ENCODE measurements at regions of chr20 and their contacts with region 1.

Region 1: GRCh38 chr20:3262566-3262965 is 23.6 kb upstream of the SLC4A11 start:
- DNase-seq: no peak
- ATAC-seq: no peak
- H3K4me3 ChIP-seq: no peak overlapping the region
- H3K27ac ChIP-seq: no peak overlapping the region
- H3K4me1 ChIP-seq: no peaks in the 10 kb centered on the region
- H3K27me3 ChIP-seq: no peaks in the 10 kb centered on the region
- CTCF ChIP-seq: no peak

Region 2: DNA sequence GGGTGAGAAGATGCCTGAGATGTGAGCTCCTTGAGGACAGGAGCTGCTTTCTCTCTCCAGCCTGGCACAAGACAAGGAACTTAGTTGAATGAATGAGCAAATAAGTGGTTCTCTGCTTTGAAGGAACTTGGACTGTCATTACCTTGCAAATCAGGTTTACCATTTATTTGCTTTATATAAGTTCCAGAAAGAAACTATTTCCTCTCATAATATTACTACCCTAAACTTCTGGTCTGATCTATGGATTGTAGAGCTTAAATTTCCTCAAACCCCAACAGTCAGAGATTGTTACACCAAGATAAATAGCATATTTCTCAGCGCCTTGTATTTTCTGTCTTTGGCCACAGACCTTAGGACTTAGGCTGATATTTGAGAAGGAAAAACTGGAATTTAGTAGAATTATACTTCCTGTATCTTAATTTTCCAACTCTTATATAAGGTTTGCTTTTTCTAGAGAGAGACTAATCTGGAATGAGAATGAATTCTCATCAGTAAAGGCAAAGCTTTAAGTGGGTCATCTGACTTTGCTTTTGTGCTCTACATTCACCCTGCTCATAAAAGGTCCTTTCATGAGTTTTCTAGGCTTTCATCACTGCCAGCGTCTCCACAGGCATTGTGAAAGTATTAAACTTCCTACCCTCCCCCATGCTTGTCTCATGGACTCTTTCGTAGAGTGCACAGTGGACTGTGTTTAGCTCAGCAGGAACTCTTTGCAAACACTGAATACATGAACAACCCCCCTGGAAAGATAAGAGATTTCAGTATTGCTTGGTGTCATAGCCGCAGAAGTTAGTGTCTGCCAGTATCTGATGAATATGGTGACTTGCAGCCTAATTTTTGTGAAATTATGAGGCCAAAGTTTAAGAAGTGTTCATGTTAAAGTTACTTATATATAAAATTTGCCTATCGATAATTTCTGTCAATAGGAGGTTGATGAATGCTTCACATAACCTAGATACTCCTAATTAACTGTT is 315.3 kb before region 1 on chr20:
- CTCF ChIA-PET with region 1: no interaction called
- POLR2A ChIA-PET with region 1: interaction called, 20 read pairs
- in situ Hi-C with region 1: no loop called
- intact Hi-C with region 1: no loop called
- DNase-seq: no peak
- ATAC-seq: no peak
- H3K4me3 ChIP-seq: no peak overlapping the region
- H3K27ac ChIP-seq: no peak overlapping the region
- H3K4me1 ChIP-seq: peaks cover 3% of the 10 kb centered on the region; the same call in 1 of the 2 replicates
- H3K27me3 ChIP-seq: no peaks in the 10 kb centered on the region
- CTCF ChIP-seq: no peak

Region 3: DNA sequence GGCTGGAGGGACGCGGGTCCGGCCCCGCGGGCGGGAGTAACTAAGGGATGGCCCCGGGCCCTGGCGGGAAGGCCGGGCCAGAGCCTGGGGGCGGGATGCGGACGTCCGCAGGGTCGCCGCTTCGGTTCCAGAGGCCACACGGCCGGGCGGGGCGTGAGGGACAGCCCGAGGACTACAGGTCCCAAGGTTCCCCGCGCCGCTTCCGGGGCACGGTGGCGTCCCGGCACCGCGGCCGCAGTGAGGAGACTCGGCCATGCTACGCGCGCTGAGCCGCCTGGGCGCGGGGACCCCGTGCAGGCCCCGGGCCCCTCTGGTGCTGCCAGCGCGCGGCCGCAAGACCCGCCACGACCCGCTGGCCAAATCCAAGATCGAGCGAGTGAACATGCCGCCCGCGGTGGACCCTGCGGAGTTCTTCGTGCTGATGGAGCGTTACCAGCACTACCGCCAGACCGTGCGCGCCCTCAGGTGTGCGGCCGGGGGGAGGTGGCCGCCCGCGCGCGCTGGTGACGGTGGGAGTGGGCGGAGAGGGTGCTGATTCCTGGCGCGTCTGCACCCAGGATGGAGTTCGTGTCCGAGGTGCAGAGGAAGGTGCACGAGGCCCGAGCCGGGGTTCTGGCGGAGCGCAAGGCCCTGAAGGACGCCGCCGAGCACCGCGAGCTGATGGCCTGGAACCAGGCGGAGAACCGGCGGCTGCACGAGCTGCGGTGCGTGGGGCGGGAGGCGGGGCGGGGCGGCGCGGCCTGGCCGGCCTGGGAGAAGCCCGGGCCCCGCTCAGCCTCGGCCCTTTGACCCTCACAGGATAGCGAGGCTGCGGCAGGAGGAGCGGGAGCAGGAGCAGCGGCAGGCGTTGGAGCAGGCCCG is 216.5 kb before region 1 on chr20 and contains the start of gene MRPS26:
- CTCF ChIA-PET with region 1: no interaction called
- POLR2A ChIA-PET with region 1: no interaction called
- in situ Hi-C with region 1: no loop called
- intact Hi-C with region 1: no loop called
- DNase-seq: no peak
- ATAC-seq: peak; percentile 96
- H3K4me3 ChIP-seq: peak within 1 kb of the TSS; percentile 82 to 88
- H3K27ac ChIP-seq: peak within 1 kb of the TSS; percentile 86
- H3K4me1 ChIP-seq: peaks cover 8% of the 10 kb centered on the region
- H3K27me3 ChIP-seq: no peaks in the 10 kb centered on the region
- CTCF ChIP-seq: no peak
- total RNA-seq, gene MRPS26: 52.7 TPM

Region 4: DNA sequence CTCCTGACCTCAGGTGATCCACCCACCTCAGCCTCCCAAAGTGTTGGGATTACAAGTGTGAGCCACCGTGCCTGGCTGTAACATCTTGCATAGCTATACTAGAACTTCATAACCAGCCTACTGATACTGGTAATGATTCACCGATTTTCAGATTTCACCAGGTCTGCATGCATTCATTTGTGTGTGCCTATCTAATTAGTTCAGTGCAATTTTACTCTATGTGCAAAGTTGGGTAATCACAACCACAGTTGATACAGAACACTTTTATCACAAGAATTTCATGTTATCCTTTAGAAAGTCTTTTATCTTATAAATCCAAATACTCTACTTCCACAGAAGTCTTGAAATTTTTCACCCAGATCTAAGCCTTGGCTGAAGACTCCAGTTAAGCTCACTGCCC is 125.1 kb before region 1 on chr20:
- CTCF ChIA-PET with region 1: no interaction called
- POLR2A ChIA-PET with region 1: interaction called, 14 read pairs
- in situ Hi-C with region 1: no loop called
- intact Hi-C with region 1: no loop called
- DNase-seq: no peak
- ATAC-seq: no peak
- H3K4me3 ChIP-seq: no peak overlapping the region
- H3K27ac ChIP-seq: no peak overlapping the region
- H3K4me1 ChIP-seq: no peaks in the 10 kb centered on the region
- H3K27me3 ChIP-seq: no peaks in the 10 kb centered on the region
- CTCF ChIP-seq: no peak

Region 5: DNA sequence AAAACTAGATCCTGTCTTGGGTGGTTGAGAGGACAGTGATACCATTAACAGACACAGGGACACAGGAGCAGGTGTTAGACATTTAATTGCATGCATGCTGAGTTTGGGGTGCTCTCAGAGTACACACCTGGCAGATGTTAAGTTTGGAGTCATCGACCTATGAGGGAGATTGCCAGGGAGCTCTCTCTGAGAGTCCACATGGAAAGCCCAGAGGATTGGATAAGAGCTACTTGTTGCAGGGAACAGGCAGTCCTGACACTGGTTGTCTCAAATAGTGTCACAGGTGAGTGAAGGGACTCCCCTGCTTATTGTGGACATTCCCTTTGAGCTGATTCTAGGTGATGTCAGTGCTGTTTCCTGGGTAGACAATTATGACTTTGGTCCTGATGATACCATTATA is 211.4 kb after region 1 on chr20:
- CTCF ChIA-PET with region 1: no interaction called
- POLR2A ChIA-PET with region 1: no interaction called
- in situ Hi-C with region 1: no loop called
- intact Hi-C with region 1: no loop called
- DNase-seq: no peak
- ATAC-seq: no peak
- H3K4me3 ChIP-seq: no peak overlapping the region
- H3K27ac ChIP-seq: no peak overlapping the region
- H3K4me1 ChIP-seq: peaks cover 11% of the 10 kb centered on the region
- H3K27me3 ChIP-seq: no peaks in the 10 kb centered on the region
- CTCF ChIP-seq: no peak

Measured in Panc1 (cell line).